ENCODE measurements at regions of chr19 and their contacts with region 1.

Region 1: GRCh38 chr19:41570639-41571112 is 5.3 kb upstream of the CEACAM21 start:
- DNase-seq: peak; percentile 92
- H3K4me3 ChIP-seq: no peak overlapping the region
- H3K27ac ChIP-seq: no peak overlapping the region
- H3K4me1 ChIP-seq: no peaks in the 10 kb centered on the region
- H3K27me3 ChIP-seq: peaks cover 0 to 66% (median 9%) of the 10 kb centered on the region in 4 donors
- CTCF ChIP-seq: peak; percentile 62 to 80 (median 64)
- EP300 ChIP-seq: no peak
- POLR2A ChIP-seq: no peak

Region 2: DNA sequence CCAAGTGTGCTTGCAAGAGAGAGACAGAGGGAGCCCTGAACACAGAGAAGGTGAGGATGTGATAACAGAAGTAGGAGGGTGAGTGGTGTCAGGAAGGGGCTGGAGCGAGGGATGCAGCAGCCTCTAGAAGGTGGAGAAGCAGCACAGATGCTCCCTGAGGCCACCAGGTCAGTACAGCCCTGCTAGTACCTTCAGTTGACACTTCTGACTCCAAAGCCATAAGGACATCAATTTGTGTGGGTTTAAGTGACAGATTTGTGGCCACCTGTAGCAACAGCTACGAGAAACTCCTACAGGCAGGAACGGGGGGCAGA is 120.9 kb before region 1 on chr19:
- intact Hi-C with region 1: loop called (anchors 2 kb)
- DNase-seq: no peak
- H3K4me3 ChIP-seq: no peak overlapping the region
- H3K27ac ChIP-seq: no peak overlapping the region
- H3K4me1 ChIP-seq: peaks cover 12 to 15% (median 13%) of the 10 kb centered on the region in 4 donors
- H3K27me3 ChIP-seq: peaks cover 0 to 31% (median 0%) of the 10 kb centered on the region in 4 donors
- CTCF ChIP-seq: no peak
- EP300 ChIP-seq: no peak
- POLR2A ChIP-seq: no peak